Gastrocnemius medialis (tissue), 4 donors: ENCODE measurements at regions of chr2 and their contacts with region 1.

Region 1: GRCh38 chr2:67650291-67651133 is 253.4 kb downstream of the ETAA1 start:
- DNase-seq: peak; percentile 74 to 83
- ATAC-seq: peak; percentile 84 to 86
- H3K4me3 ChIP-seq: no peak overlapping the region
- H3K27ac ChIP-seq: peak overlapping the region; percentile 64 to 71 (median 66)
- H3K4me1 ChIP-seq: peaks cover 25 to 26% of the 10 kb centered on the region in 2 donors
- H3K27me3 ChIP-seq: no peaks in the 10 kb centered on the region
- CTCF ChIP-seq: peak; percentile 42 to 74 (median 53)
- POLR2A ChIP-seq: no peak

Region 2: GRCh38 chr2:66429071-66429477 is 1221.4 kb before region 1 on chr2:
- in situ Hi-C with region 1: loop called in 2 of 4 experiments (anchors 25 kb)
- intact Hi-C with region 1: loop called (anchors 1 kb)
- DNase-seq: no peak
- ATAC-seq: peak in 1 of 2 donors; percentile 22
- H3K4me3 ChIP-seq: no peak overlapping the region
- H3K27ac ChIP-seq: no peak overlapping the region
- H3K4me1 ChIP-seq: peaks cover 0 to 13% of the 10 kb centered on the region in 2 donors
- H3K27me3 ChIP-seq: peaks cover 25 to 44% (median 33%) of the 10 kb centered on the region in 3 donors
- CTCF ChIP-seq: peak; percentile 62 to 86 (median 77)
- POLR2A ChIP-seq: no peak

Region 3: DNA sequence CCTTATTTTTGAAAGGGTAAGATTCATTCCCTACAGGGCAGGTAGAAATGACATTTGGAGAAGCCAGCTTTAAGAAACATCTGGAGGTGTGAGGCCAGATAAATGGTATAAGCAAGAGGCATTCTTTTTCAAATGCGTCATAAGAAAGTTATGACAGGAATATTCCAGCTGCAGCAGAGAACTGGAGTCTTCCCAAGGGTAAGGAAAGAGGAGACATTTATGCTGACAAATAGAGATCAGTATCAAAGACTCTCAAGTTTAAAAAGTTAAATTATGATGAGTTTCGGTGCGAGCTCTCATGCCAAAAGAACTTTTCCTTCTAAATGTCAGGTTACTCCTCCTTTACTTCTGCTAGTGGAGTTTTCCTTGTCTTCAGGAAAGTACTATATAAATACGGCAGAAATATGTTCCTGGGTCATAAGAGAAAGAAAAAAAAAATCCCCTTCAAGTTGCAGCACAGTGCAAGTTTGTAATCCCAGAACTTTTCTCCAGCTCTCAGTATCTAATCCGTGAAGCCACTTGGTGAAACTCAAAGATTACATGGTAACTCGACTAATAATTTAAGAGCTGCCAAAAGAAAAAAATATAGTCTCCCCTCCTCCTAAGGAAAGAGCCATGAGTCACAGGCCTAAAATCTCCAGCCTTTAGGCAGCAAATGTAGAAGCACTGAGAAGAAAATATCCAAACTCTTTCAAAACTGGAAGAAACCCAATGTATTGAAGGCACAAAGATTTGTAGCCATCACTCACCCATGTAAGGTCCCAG is 787.4 kb before region 1 on chr2:
- in situ Hi-C with region 1: no loop called
- intact Hi-C with region 1: no loop called
- DNase-seq: no peak
- ATAC-seq: no peak
- H3K4me3 ChIP-seq: no peak overlapping the region
- H3K27ac ChIP-seq: peak overlapping the region in 1 of 4 donors; percentile 29
- H3K4me1 ChIP-seq: no peaks in the 10 kb centered on the region
- H3K27me3 ChIP-seq: no peaks in the 10 kb centered on the region
- CTCF ChIP-seq: no peak
- POLR2A ChIP-seq: no peak

Region 4: GRCh38 chr2:67259581-67260342 is 390.8 kb before region 1 on chr2:
- in situ Hi-C with region 1: no loop called
- intact Hi-C with region 1: loop called (anchors 10 kb)
- DNase-seq: peak in 1 of 2 donors; percentile 13
- ATAC-seq: peak in 1 of 2 donors; percentile 49
- H3K4me3 ChIP-seq: no peak overlapping the region
- H3K27ac ChIP-seq: peak overlapping the region in 3 of 4 donors; percentile 15 to 57 (median 27)
- H3K4me1 ChIP-seq: peaks cover 5 to 9% of the 10 kb centered on the region in 2 donors
- H3K27me3 ChIP-seq: no peaks in the 10 kb centered on the region
- CTCF ChIP-seq: no peak
- POLR2A ChIP-seq: no peak

Region 5: GRCh38 chr2:67463810-67464209 is 186.7 kb before region 1 on chr2:
- in situ Hi-C with region 1: no loop called
- intact Hi-C with region 1: loop called (anchors 2 kb)
- DNase-seq: peak; percentile 15 to 41
- ATAC-seq: peak; percentile 97
- H3K4me3 ChIP-seq: no peak overlapping the region
- H3K27ac ChIP-seq: peak overlapping the region in 2 of 4 donors; percentile 46 to 67
- H3K4me1 ChIP-seq: peaks cover 5 to 11% of the 10 kb centered on the region in 2 donors
- H3K27me3 ChIP-seq: no peaks in the 10 kb centered on the region
- CTCF ChIP-seq: no peak
- POLR2A ChIP-seq: peak in 1 of 2 donors; percentile 16

Region 6: DNA sequence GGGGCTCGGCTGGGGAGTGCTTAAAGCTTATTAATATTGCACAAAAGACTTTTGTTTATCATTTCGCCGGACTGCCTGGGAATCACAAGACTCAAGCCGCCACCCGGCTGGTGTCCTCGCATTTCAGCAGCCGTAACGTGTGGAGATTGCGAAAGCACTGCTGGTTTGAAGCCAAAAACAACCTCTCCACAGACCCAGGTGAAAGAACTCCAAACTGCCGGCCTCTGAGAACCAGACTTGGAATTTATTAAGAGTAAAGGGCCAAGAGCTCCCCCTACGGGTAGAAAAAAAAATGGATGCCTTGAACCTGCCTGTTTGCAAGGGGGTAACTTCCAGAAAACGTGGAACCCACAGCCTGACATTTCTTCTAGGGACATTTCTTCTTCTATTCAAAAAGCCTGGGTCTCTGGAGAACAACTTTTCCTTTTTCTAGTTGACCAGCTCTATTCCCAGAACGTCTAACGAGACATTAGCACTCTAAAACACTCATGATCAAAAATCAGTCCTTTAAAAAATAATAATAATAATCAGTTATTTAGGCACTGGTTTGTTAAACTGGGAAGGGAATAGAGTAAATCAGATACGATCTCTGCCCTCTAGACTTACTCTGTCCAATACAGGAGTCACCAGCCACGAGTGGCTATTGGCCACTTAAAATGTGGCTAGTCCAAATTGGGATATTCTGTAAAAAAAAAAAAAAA is 196.0 kb after region 1 on chr2:
- in situ Hi-C with region 1: no loop called
- intact Hi-C with region 1: loop called (anchors 2 kb)
- DNase-seq: peak; percentile 64 to 82
- ATAC-seq: peak; percentile 90 to 98
- H3K4me3 ChIP-seq: peak overlapping the region; percentile 8 to 28 (median 14)
- H3K27ac ChIP-seq: no peak overlapping the region
- H3K4me1 ChIP-seq: peaks cover 6 to 7% of the 10 kb centered on the region in 2 donors
- H3K27me3 ChIP-seq: no peaks in the 10 kb centered on the region
- CTCF ChIP-seq: peak; percentile 59 to 78 (median 62)
- POLR2A ChIP-seq: no peak